Mucosa of descending colon (tissue), 3 donors: ENCODE measurements at regions of chr10 and their contacts with region 1.

Region 1: DNA sequence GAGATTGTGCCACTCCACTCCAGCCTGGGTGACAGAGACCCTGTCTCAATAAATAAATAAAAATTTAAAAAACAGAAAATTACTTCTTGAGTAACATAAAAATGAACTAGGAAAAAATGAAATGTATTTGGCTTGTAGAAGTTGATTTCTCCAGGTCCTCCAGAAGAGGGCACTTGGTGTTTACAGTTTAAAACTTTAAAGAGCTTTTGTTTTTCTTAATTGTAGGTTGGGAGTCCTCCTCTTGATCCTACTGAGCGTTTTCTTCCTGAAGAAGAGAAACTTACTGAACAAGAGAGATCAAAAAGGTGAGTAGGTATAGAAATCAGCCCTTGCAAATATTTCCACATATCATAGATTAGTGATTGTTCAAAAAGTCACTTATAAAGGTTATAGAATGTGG is 16.2 kb downstream of the KIFBP start:
- DNase-seq: no peak
- ATAC-seq: peak; percentile 32
- H3K4me3 ChIP-seq: no peak overlapping the region
- H3K4me1 ChIP-seq: no peaks in the 10 kb centered on the region
- CTCF ChIP-seq: peak; percentile 9

Region 2: GRCh38 chr10:69087590-69088470 is 83.0 kb after region 1 on chr10 and contains the start of gene SRGN:
- intact Hi-C with region 1: loop called (anchors 5 to 10 kb)
- DNase-seq: peak in 2 of 3 donors; percentile 37 to 81
- ATAC-seq: peak; percentile 76
- H3K4me3 ChIP-seq: no peak within 1 kb of the TSS
- H3K4me1 ChIP-seq: no peaks in the 10 kb centered on the region
- CTCF ChIP-seq: no peak
- total RNA-seq, gene SRGN: 15.6 to 54.6 (median 43.9) TPM

Region 3: DNA sequence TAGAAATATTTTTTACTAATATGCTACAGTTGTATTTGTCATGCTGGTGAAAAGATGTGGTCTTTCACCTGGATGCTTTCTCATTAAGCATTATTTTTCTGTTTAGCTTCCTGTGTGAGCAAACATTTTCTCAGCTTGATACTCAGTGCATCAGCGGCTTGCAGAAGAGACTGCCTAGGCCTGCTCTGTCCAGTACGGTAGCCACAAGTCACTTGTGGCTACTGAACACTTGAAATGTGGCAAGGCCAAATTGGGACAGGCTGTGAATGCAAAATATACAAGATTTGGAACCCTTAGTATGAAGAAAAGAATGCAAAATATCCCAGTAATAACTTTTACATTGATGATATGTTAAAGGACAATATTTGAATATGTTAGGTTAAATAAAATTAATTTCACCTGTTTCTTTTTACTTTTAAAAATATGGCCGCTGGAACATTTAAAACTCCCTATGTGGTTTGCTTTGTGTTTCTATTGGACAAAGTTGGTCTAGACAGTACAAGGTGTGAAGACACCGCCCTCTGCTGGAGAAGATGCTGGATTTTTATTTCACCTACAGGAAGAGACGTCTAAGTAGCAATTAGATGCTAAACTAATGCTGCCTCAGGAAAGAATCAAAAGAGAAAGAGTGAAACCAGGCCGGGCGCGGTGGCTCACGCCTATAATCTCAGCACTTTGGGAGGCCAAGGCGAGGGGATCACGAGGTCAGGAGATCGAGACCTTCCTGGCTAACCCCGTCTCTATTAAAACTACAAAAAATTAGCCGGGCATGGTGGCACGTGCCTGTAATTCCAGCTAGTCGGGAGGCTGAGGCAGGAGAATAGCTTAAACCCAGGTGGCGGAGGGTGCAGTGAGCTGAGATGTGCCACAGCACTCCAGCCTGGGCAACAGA is 88.4 kb after region 1 on chr10:
- intact Hi-C with region 1: loop called (anchors 5 to 10 kb)
- DNase-seq: peak in 2 of 3 donors; percentile 38 to 97
- ATAC-seq: peak; percentile 88
- H3K4me3 ChIP-seq: no peak overlapping the region
- H3K4me1 ChIP-seq: no peaks in the 10 kb centered on the region
- CTCF ChIP-seq: peak; percentile 50

Region 4: DNA sequence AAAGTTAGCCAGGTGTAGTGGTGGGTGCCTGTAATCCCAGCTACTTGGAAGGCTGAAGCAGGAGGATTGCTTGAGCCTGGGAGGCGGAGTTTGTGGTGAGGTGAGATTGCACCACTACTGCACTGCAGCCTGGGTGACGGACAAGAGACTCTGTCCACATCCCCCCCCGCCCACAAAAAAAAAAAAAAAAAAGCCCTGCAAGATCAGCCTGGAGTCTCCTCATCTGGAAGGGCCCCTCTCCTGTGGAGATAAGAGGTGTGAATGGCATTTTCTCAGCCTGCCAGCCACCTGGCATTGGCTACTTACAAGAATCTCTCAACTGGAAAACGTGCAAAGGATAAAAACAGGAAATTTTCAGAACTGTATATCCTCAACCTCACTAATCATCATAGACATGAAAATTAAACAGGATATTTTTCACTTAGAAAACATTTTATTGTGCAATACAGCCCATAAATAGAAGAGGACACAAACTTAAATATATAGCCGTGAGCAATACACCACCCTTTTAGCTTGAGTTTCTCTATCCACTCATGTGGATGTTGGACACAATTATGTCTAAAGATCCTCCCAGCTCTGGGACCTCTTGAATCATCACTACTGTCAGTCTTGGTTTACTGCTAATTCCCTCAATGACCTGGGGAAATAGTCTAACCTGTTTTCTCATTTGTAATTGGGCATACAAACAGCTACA is 435.1 kb after region 1 on chr10:
- intact Hi-C with region 1: no loop called
- DNase-seq: peak in 2 of 3 donors; percentile 48 to 55
- ATAC-seq: peak; percentile 60
- H3K4me3 ChIP-seq: no peak overlapping the region
- H3K4me1 ChIP-seq: peaks cover 22% of the 10 kb centered on the region
- CTCF ChIP-seq: no peak